ENCODE measurements at regions of chr14 and their contacts with region 1.

Region 1: DNA sequence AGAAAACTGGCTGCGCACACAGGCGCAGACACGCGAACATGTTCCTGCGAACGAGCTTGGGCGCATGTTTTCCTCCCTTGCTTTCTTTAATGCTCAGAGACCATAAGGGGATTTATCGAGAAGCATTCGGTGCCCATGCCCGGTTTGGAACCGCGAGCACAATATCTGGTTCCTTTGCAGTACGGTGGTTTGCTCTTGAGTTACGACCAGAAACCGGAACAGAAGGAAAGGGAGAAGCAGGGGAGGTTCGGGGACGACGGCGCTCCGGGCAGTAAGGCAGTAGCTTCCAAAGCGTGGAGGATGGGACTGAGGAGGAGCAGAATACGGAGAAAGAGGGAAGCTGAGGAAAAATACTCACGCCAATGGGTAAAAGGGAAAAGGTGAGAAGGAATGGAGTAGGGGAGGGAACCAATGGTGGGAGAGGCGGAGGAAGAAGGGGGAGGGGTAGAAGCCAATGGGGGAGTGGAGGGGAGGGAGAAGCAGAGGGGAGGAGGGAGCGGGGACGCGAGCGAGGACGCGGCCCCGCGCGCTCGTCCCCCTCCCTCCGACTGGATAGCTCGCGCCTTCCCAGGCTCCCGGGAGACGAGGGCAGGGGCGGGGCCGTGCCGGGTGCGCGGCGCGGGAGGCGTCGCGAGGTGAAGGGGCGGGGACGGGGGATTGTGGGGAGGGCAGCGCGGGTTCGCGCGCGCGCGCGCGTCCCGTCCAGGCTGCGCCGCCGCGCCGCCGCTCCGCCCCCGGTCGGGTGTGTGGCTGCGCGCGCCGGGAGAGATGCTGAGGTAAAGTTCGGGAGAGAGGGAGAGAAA is 625 bp upstream of the ARHGAP5 start:
- DNase-seq: peak; percentile 96 to 99 (median 98)
- H3K4me3 ChIP-seq: peak overlapping the region; percentile 91 to 97 (median 95)
- H3K27ac ChIP-seq: peak overlapping the region; percentile 98 to 99
- H3K4me1 ChIP-seq: peaks cover 0 to 16% (median 4%) of the 10 kb centered on the region in 3 donors
- H3K27me3 ChIP-seq: no peaks in the 10 kb centered on the region
- CTCF ChIP-seq: no peak

Region 2: DNA sequence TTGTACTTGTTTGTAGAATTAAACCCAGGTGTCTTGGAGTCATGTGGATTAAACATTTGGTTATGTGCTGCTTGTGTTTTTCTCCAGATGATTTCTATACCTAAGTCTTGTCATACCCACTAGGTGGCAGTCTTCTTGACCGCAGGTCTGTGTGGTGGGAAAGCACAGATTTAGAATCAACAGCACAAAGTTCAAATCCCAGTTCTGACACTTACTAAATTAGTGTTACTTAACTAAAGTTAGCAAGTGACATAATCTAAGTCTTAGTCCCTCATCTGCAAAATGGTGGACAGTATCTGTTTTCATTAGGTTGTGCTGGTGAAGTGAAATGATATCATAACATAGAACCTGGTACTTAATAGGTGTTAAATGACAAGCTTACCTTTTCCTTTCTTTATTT is 150.4 kb before region 1 on chr14:
- intact Hi-C with region 1: loop called (anchors 10 kb)
- DNase-seq: peak in 2 of 5 donors; percentile 32 to 42
- H3K4me3 ChIP-seq: no peak overlapping the region
- H3K27ac ChIP-seq: peak overlapping the region in 1 of 2 donors; percentile 86
- H3K4me1 ChIP-seq: peaks cover 9 to 45% (median 21%) of the 10 kb centered on the region in 3 donors
- H3K27me3 ChIP-seq: no peaks in the 10 kb centered on the region
- CTCF ChIP-seq: peak; percentile 54

Region 3: DNA sequence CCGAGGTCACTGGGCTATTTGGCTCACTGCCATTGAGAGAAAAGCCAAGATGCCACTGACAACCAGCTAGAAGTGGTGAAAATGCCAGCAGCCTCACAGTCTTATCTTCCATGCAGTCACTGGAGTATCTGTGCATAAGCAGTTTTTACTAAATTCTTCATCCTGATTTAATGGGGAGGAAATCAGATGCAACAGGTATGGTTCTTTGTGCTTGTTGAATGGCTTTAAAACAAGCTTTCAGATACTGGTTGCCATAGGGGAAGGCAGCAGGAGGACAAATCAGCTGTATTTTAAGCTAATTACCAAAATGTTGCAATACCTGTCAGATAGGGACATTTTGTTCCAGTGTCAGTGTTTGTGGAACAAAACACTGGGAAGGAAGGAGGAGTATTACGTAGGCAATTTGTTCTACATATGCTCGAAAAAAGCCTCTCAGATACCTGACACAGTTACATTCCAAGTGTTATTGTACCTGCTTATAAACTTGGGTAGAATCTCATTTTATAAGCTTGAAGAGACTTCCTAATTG is 53.5 kb before region 1 on chr14:
- intact Hi-C with region 1: no loop called
- DNase-seq: no peak
- H3K4me3 ChIP-seq: no peak overlapping the region
- H3K27ac ChIP-seq: no peak overlapping the region
- H3K4me1 ChIP-seq: no peaks in the 10 kb centered on the region
- H3K27me3 ChIP-seq: no peaks in the 10 kb centered on the region
- CTCF ChIP-seq: no peak

Measured in kidney (tissue), 22 donors.